Dorsolateral prefrontal cortex (tissue), 120 donors: ENCODE measurements at regions of chr6 and their contacts with region 1.

Region 1: GRCh38 chr6:26520853-26521599 is 17.1 kb upstream of the HMGN4 start:
- DNase-seq: peak; percentile 64 to 83 (median 80)
- H3K4me3 ChIP-seq: peak overlapping the region; percentile 45 to 78 (median 68)
- H3K27ac ChIP-seq: peak overlapping the region; percentile 58 to 96 (median 90)
- H3K27me3 ChIP-seq: no peaks in the 10 kb centered on the region
- CTCF ChIP-seq: peak in 4 of 56 donors; percentile 0 to 6 (median 5)

Region 2: DNA sequence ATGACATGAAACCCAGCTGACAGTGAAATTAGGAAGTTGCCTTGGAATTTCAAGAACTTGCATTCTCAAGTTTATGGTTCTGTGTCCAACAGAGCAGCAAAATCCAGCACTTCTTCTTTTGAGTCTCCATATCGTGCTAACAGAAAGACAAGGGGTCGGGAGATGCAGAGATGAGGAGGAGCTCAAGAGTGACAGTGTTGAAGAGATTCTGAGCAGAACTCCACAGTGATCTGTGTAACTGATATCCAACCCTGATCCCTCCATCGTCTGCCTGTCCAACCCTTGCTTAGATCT is 42.1 kb before region 1 on chr6:
- intact Hi-C with region 1: no loop called
- DNase-seq: no peak
- H3K4me3 ChIP-seq: no peak overlapping the region
- H3K27ac ChIP-seq: peak overlapping the region in 3 of 59 donors; percentile 7 to 17 (median 15)
- H3K27me3 ChIP-seq: no peaks in the 10 kb centered on the region
- CTCF ChIP-seq: no peak

Region 3: GRCh38 chr6:26532699-26533531 is 11.9 kb after region 1 on chr6:
- intact Hi-C with region 1: loop called in 1 of 2 experiments (anchors 1 kb)
- DNase-seq: peak; percentile 81 to 96 (median 90)
- H3K4me3 ChIP-seq: peak overlapping the region; percentile 37 to 89 (median 75)
- H3K27ac ChIP-seq: peak overlapping the region; percentile 6 to 92 (median 82)
- H3K27me3 ChIP-seq: no peaks in the 10 kb centered on the region
- CTCF ChIP-seq: peak in 14 of 56 donors; percentile 8 to 51 (median 14)